ENCODE measurements at regions of chr18 and their contacts with region 1.

Region 1: GRCh38 chr18:76982841-76983587 is 149.6 kb downstream of the MBP start:
- DNase-seq: peak; percentile 96
- H3K4me3 Mint-ChIP-seq: no peak overlapping the region
- H3K27ac Mint-ChIP-seq: no peak overlapping the region
- H3K4me1 Mint-ChIP-seq: peaks cover 5% of the 10 kb centered on the region
- H3K27me3 Mint-ChIP-seq: no peaks in the 10 kb centered on the region

Region 2: GRCh38 chr18:76875390-76876325 is 107.4 kb before region 1 on chr18:
- CTCF ChIA-PET with region 1: interaction called, 4 read pairs
- intact Hi-C with region 1: loop called (anchors 1 kb)
- DNase-seq: peak; percentile 65
- H3K4me3 Mint-ChIP-seq: no peak overlapping the region
- H3K27ac Mint-ChIP-seq: no peak overlapping the region
- H3K4me1 Mint-ChIP-seq: peaks cover 14% of the 10 kb centered on the region
- H3K27me3 Mint-ChIP-seq: no peaks in the 10 kb centered on the region

Region 3: DNA sequence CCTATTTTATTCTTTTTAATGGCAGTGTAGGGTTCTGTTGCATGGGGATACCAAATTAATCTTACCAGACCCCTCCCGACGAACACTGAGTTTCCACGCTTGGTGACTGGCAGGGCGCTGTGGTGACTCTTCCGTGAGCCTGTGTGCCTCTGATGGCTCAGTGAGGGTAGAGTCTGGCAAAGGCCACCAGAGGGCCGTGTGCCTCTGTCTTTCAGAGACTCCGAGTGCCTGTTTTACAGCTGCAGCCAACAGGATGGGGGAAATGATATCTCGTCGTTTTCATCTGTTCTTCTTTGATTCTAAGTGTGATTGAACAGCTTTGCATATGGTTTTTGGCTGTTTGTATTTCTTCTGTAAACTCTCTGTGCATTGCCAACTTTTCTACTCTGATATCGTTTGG is 60.9 kb before region 1 on chr18:
- CTCF ChIA-PET with region 1: interaction called, 8 read pairs
- intact Hi-C with region 1: loop called (anchors 1 kb)
- DNase-seq: peak; percentile 64
- H3K4me3 Mint-ChIP-seq: no peak overlapping the region
- H3K27ac Mint-ChIP-seq: no peak overlapping the region
- H3K4me1 Mint-ChIP-seq: peaks cover 11% of the 10 kb centered on the region
- H3K27me3 Mint-ChIP-seq: no peaks in the 10 kb centered on the region

Region 4: GRCh38 chr18:77079954-77080682 is 97.1 kb after region 1 on chr18:
- CTCF ChIA-PET with region 1: no interaction called
- intact Hi-C with region 1: no loop called
- DNase-seq: no peak
- H3K4me3 Mint-ChIP-seq: no peak overlapping the region
- H3K27ac Mint-ChIP-seq: no peak overlapping the region
- H3K4me1 Mint-ChIP-seq: peaks cover 57% of the 10 kb centered on the region
- H3K27me3 Mint-ChIP-seq: no peaks in the 10 kb centered on the region

Region 5: GRCh38 chr18:77124452-77124922 is 141.5 kb after region 1 on chr18:
- CTCF ChIA-PET with region 1: no interaction called
- intact Hi-C with region 1: no loop called
- DNase-seq: peak; percentile 81
- H3K4me3 Mint-ChIP-seq: peak overlapping the region; percentile 70
- H3K27ac Mint-ChIP-seq: peak overlapping the region; percentile 93
- H3K4me1 Mint-ChIP-seq: peaks cover 88% of the 10 kb centered on the region
- H3K27me3 Mint-ChIP-seq: no peaks in the 10 kb centered on the region

Region 6: GRCh38 chr18:77650799-77651385 is 667.9 kb after region 1 on chr18:
- CTCF ChIA-PET with region 1: interaction called, 4 read pairs
- intact Hi-C with region 1: loop called (anchors 5 kb)
- DNase-seq: peak; percentile 70
- H3K4me3 Mint-ChIP-seq: no peak overlapping the region
- H3K27ac Mint-ChIP-seq: no peak overlapping the region
- H3K4me1 Mint-ChIP-seq: no peaks in the 10 kb centered on the region
- H3K27me3 Mint-ChIP-seq: peaks cover 18% of the 10 kb centered on the region

Measured in activated naive CD4-positive, alpha-beta T cell treated with anti-CD3 and anti-CD28 coated beads for 36 hours (primary cell).